Activated CD4-positive, alpha-beta memory T cell treated with anti-CD3 and anti-CD28 coated beads for 36 hours (primary cell): ENCODE measurements at regions of chr20 and their contacts with region 1.

Region 1: DNA sequence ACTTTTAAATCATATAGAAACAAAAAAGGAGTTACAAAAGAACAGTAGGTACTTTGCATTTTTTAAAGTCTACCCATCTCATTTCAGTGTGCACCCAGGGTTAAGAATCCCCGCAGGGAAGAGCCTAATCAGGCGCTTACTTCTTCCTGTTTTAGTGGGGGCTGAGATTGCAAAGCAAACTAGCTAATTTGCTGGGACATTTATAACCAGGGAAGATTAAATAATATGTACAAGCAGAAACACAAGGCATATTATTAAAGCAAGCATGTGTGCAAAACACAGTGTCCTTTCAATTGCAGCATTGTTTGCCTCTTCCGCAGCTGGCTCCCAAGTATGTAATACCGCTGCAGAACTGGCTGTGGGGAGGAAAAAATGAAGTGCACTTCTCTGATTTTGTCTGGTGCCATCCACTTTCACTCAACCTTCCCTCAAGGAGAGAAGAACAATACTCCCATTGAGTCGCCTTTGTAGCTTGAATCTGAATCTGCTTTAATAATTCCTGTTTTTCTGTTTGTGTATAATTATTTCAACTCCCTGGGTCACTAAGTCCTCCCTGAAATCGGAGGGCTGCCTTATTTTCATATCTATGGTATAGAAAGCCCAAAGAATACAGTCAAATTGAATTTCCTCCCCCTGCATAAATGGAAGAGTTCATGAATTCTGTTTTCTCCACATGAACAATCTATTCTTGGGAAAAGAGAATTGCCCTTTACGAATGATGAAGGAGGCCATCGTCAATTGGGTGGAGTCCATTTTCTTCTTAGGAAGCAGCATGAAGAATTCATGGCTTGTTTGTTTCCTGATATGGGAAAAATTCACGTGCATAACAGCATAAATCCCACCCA is 23.3 kb upstream of the BCAS1 start:
- DNase-seq: no peak
- H3K4me3 Mint-ChIP-seq: no peak overlapping the region
- H3K27ac Mint-ChIP-seq: no peak overlapping the region
- H3K4me1 Mint-ChIP-seq: no peaks in the 10 kb centered on the region
- H3K27me3 Mint-ChIP-seq: peaks cover 1% of the 10 kb centered on the region

Region 2: GRCh38 chr20:53606364-53606985 is 487.2 kb before region 1 on chr20:
- CTCF ChIA-PET with region 1: no interaction called
- POLR2A ChIA-PET with region 1: no interaction called
- intact Hi-C with region 1: no loop called
- DNase-seq: no peak
- H3K4me3 Mint-ChIP-seq: no peak overlapping the region
- H3K27ac Mint-ChIP-seq: no peak overlapping the region
- H3K4me1 Mint-ChIP-seq: peaks cover 33% of the 10 kb centered on the region
- H3K27me3 Mint-ChIP-seq: no peaks in the 10 kb centered on the region

Region 3: DNA sequence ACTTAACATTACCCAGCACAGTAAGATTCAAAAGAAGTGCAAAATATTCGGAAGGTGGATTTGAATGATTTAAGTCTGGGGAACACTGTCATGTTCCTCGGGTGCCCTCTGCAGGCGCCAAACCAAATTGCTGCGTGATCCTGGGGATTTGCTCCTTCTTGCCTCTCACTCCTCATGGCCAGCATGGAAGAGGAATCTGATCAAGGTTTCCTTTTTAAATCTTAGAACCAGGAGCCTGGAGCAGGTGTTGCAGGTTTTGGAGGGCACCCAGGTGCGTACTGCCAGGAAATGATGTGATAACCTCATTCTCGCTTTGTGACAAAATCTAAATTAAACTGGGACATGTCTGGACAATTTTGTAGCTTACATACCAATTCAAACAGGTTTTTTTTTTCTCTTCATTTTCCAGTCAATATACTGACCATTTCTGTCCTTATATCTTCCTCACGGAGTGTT is 106.1 kb after region 1 on chr20:
- CTCF ChIA-PET with region 1: interaction called, 233 read pairs
- POLR2A ChIA-PET with region 1: no interaction called
- intact Hi-C with region 1: loop called (anchors 1 kb)
- DNase-seq: peak; percentile 79
- H3K4me3 Mint-ChIP-seq: no peak overlapping the region
- H3K27ac Mint-ChIP-seq: no peak overlapping the region
- H3K4me1 Mint-ChIP-seq: no peaks in the 10 kb centered on the region
- H3K27me3 Mint-ChIP-seq: peaks cover 2% of the 10 kb centered on the region

Region 4: GRCh38 chr20:54649511-54649962 is 555.9 kb after region 1 on chr20:
- CTCF ChIA-PET with region 1: interaction called, 5 read pairs
- POLR2A ChIA-PET with region 1: no interaction called
- intact Hi-C with region 1: loop called (anchors 1 kb)
- DNase-seq: peak; percentile 75
- H3K4me3 Mint-ChIP-seq: no peak overlapping the region
- H3K27ac Mint-ChIP-seq: no peak overlapping the region
- H3K4me1 Mint-ChIP-seq: no peaks in the 10 kb centered on the region
- H3K27me3 Mint-ChIP-seq: peaks cover 13% of the 10 kb centered on the region